ENCODE measurements at regions of chr12 and their contacts with region 1.

Region 1: DNA sequence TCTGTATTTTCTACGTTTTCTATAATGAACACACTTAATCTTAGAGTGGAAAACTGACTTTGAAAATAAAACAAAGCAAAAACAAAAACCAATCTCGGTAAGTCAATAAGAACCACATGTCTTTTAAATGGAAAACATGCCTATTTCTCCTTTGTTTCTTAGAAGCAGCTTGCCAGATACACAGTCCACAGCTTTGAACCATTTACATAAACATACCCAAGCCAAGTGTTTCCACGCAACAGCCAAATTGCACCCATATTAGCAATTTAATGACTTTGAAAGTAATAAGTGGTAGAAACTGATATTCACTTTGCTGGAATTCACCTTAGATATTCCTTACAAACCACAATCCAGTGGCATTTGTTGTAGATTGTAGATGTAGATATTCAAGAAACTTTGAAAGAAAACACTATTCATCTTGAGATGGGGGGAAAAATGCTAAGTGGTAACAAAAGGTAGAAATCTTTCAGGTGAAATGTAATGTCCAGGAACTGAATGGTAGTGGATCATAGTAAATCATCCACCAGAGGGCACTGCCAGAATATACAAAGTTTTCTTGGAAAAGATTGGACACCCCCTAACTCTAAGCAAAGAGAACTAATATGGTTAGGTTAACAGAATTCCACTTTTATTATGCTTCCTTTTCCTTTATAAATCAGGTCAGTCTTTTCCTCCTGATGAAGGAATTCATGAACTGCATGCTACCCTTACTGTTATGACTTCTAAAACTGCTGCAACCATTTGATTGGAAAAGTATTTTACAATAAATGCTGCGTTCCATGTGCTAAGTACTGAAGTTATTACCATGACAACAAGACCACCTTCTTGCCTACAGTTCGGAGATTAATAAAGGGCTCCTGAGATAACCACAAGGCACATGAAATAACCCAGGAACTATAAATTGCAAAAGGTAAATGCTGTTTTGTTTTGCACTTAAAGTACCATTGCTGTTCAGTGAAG is 69.8 kb downstream of the RERG start:
- DNase-seq: no peak
- H3K4me3 Mint-ChIP-seq: no peak overlapping the region
- H3K27ac Mint-ChIP-seq: no peak overlapping the region
- H3K4me1 Mint-ChIP-seq: no peaks in the 10 kb centered on the region
- H3K27me3 Mint-ChIP-seq: peaks cover 8% of the 10 kb centered on the region

Region 2: GRCh38 chr12:15116086-15116485 is 35.4 kb before region 1 on chr12:
- CTCF ChIA-PET with region 1: no interaction called
- POLR2A ChIA-PET with region 1: no interaction called
- intact Hi-C with region 1: loop called (anchors 1 kb)
- DNase-seq: no peak
- H3K4me3 Mint-ChIP-seq: no peak overlapping the region
- H3K27ac Mint-ChIP-seq: no peak overlapping the region
- H3K4me1 Mint-ChIP-seq: no peaks in the 10 kb centered on the region
- H3K27me3 Mint-ChIP-seq: peaks cover 4% of the 10 kb centered on the region

Measured in activated CD4-positive, alpha-beta memory T cell treated with anti-CD3 and anti-CD28 coated beads for 36 hours (primary cell).